Prostate gland (tissue), 2 donors: ENCODE measurements at regions of chr14 and their contacts with region 1.

Region 1: DNA sequence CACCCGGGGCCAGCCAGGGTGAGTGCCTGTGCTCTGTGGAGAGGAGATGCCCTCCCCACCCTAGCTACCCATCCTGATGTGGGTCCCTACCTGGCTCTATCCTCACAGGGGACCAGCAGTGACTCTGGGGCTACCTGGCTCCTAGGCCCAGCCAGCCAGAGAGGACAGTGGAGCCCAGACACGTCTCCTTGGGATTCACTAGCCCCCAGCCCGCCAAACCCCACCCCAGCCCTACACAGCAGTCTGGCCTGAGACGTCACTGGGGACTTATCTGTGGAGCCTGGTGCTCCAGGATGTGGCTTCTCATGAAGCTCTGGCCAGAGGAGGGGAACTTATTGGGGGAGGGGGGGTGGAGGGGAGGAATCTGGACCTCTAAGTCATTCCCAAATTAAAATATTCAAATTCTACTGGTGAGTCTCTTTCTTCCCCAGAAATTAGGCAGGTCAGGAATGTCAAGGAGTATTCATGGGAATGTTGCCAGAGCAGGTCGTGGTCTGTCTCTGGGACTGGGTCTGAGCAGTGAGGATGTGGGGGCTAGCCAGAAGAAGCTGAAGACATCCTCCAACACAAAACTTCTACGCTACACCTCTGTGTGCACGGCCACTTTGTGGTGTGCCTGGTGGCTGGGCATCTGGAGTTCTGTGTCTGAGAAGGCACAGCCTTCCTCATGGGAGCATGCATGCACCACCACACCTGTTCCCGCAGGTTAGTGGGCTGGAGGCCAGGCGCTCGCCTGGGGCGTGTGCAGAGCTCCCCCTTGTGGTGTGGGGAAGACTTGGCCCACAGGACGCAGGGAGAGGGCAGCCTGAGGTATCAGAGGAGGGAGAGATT is 2.7 kb downstream of the CMTM5 start:
- DNase-seq: peak; percentile 83
- H3K4me3 ChIP-seq: no peak overlapping the region
- H3K27ac ChIP-seq: no peak overlapping the region
- H3K4me1 ChIP-seq: no peaks in the 10 kb centered on the region
- H3K27me3 ChIP-seq: no peaks in the 10 kb centered on the region
- CTCF ChIP-seq: peak; percentile 85 to 98 (median 96)
- POLR2A ChIP-seq: no peak

Region 2: DNA sequence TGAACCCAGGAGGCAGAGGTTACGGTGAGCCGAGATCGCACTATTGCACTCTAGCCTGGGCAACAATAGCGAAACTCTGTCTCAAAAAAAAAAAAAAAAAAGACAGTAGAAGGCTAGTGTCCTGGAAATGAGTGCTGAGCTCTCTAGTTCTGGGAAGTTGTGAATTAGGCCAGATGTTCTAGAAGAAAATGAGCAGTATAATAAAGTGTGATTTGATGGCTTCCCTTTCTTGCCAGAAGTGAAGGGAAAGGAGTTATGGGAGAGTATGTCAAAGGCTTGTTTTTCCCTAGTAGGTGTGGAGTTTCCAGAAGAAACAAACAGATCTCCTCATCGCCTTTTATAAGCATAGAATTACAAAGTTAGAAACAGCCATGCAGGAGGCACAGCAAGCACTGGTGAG is 121.3 kb before region 1 on chr14:
- intact Hi-C with region 1: loop called (anchors 5 kb)
- DNase-seq: no peak
- H3K4me3 ChIP-seq: no peak overlapping the region
- H3K27ac ChIP-seq: peak overlapping the region in 1 of 2 donors; percentile 3
- H3K4me1 ChIP-seq: no peaks in the 10 kb centered on the region
- H3K27me3 ChIP-seq: no peaks in the 10 kb centered on the region
- CTCF ChIP-seq: no peak
- POLR2A ChIP-seq: no peak

Region 3: DNA sequence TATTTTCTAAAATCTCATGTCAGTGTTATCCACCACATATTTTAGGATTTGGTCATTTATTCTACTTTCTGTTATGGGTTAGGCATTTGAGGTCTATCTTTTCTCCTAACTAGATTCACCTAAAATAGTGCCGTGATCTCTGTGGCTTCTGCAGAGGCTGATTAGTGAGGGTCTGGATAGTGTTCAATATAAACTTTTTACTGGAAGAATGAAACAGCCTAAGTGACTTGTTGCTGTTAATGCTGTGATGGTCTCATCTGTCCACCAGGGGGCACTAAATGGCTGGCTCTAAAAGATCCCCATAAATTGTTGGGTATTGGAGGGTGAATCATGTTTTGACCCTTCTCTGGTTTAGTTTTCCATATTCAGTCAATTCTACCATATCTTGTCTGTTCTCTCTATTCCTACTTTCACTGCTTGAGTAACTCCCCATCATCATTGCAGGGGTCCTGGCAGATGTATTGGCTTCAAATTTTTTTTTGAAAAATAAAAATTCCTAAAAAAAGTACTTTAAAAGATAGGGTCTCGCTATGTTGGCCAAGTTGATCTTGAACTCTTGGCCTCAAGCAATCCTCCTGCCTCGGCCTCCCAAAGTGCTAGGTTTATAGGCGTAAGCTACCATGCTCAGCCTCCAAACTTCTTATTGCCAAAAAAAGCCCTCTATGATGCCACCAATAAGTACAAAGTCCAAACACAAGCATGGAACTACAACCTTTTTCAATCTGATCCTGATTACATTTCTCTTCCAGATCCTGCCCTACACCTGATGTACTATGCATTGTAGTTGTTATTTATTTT is 51.4 kb before region 1 on chr14:
- intact Hi-C with region 1: loop called (anchors 1 kb)
- DNase-seq: peak; percentile 82
- H3K4me3 ChIP-seq: no peak overlapping the region
- H3K27ac ChIP-seq: peak overlapping the region; percentile 37 to 78
- H3K4me1 ChIP-seq: no peaks in the 10 kb centered on the region
- H3K27me3 ChIP-seq: no peaks in the 10 kb centered on the region
- CTCF ChIP-seq: peak; percentile 87 to 98 (median 92)
- POLR2A ChIP-seq: no peak